Activated B cell treated with CpG ODN at 0.5 μM for 24 hours (primary cell): ENCODE measurements at regions of chr15 and their contacts with region 1.

Region 1: DNA sequence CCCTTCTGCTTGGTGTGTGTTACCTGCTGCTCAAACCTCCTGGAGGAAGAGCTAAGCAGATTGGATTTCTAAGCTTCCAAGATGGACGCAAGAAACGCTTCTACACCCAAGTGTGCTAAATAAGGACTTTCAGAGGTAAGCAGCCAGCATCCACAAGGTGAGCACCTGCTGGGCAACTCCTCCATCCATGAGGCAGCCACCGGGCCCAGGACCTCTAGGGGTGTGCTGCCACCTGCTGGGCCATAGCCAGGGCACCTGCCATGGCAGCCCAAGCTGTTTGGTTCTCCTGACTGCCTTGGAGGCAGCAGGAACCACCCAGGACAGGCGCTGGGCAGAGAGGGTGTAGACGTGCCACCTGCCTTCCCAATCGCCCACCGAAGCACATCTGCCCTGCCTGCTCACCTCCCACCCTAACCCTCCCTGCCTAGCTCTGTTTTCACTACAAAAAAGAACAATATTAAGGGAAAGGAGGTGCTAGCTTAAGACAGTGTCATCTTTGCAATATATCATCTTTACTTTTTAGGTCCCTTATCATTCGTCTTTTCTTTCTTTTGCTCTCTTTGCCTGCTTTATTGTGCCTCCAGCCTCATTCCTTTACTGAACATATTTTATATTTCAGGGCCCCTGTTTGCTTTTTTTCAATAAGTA is 12.9 kb downstream of the C15orf62 start:
- DNase-seq: peak; percentile 76
- ATAC-seq: peak; percentile 100
- H3K4me3 Mint-ChIP-seq: no peak overlapping the region
- H3K27ac Mint-ChIP-seq: peak overlapping the region; percentile 18
- H3K4me1 Mint-ChIP-seq: peaks cover 12% of the 10 kb centered on the region
- H3K27me3 Mint-ChIP-seq: no peaks in the 10 kb centered on the region
- CTCF ChIP-seq: no peak

Region 2: DNA sequence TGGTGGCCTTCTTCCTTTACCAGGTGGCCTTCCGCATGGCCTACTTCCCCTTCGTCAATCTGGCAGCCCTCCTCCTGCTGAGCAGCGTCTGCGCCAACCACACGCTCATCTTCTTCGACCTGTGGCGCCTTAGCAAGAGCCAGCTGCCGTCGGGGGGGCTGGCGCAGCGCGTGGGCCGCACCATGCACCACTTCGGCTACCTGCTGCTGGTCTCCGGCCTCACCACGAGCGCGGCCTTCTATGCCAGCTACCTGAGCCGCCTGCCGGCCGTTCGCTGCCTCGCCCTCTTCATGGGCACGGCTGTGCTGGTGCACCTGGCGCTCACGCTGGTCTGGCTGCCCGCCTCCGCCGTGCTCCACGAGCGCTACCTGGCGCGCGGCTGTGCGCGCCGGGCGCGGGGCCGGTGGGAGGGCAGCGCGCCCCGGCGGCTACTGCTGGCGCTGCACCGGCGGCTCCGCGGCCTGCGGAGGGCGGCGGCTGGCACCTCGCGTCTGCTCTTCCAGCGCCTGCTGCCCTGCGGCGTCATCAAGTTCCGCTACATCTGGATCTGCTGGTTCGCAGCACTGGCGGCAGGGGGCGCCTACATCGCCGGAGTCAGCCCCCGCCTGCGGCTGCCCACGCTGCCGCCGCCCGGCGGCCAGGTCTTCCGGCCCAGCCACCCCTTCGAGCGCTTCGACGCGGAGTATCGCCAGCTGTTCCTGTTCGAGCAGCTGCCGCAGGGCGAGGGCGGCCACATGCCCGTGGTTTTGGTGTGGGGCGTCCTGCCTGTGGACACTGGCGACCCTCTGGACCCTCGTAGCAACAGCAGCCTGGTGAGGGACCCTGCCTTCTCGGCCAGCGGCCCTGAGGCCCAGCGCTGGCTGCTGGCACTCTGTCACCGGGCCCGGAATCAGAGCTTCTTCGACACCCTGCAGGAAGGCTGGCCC is 414.8 kb before region 1 on chr15:
- CTCF ChIA-PET with region 1: no interaction called
- POLR2A ChIA-PET with region 1: no interaction called
- intact Hi-C with region 1: loop called (anchors 10 kb)
- DNase-seq: peak; percentile 78
- ATAC-seq: peak; percentile 93
- H3K4me3 Mint-ChIP-seq: peak overlapping the region; percentile 83
- H3K27ac Mint-ChIP-seq: peak overlapping the region; percentile 82
- H3K4me1 Mint-ChIP-seq: peaks cover 13% of the 10 kb centered on the region
- H3K27me3 Mint-ChIP-seq: no peaks in the 10 kb centered on the region
- CTCF ChIP-seq: no peak

Region 3: GRCh38 chr15:40513609-40514008 is 269.1 kb before region 1 on chr15:
- CTCF ChIA-PET with region 1: interaction called, 23 read pairs
- POLR2A ChIA-PET with region 1: no interaction called
- intact Hi-C with region 1: no loop called
- DNase-seq: no peak
- ATAC-seq: no peak
- H3K4me3 Mint-ChIP-seq: no peak overlapping the region
- H3K27ac Mint-ChIP-seq: no peak overlapping the region
- H3K4me1 Mint-ChIP-seq: peaks cover 20% of the 10 kb centered on the region
- H3K27me3 Mint-ChIP-seq: no peaks in the 10 kb centered on the region
- CTCF ChIP-seq: no peak

Region 4: DNA sequence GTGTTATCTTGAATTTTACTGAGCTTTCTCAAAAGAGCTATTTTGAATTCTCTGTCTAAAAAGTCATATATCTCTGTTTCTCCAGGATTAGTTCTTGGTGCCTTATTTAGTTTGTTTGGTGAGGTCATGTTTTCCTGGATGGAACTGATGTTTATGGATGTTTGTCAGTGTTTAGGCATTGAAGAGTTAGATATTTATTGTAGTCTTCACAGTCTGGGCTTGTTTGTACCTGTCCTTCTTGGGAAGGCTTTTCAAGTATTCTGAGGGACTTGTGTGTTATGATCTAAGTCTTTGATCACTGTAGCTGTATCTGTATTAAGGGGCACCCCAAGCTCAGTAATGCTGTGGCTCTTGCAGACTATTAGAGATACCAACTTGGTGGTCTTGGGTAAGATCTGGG is 98.3 kb before region 1 on chr15:
- CTCF ChIA-PET with region 1: interaction called, 48 read pairs
- POLR2A ChIA-PET with region 1: no interaction called
- intact Hi-C with region 1: loop called (anchors 1 kb)
- DNase-seq: no peak
- ATAC-seq: no peak
- H3K4me3 Mint-ChIP-seq: no peak overlapping the region
- H3K27ac Mint-ChIP-seq: no peak overlapping the region
- H3K4me1 Mint-ChIP-seq: peaks cover 15% of the 10 kb centered on the region
- H3K27me3 Mint-ChIP-seq: no peaks in the 10 kb centered on the region
- CTCF ChIP-seq: no peak

Region 5: DNA sequence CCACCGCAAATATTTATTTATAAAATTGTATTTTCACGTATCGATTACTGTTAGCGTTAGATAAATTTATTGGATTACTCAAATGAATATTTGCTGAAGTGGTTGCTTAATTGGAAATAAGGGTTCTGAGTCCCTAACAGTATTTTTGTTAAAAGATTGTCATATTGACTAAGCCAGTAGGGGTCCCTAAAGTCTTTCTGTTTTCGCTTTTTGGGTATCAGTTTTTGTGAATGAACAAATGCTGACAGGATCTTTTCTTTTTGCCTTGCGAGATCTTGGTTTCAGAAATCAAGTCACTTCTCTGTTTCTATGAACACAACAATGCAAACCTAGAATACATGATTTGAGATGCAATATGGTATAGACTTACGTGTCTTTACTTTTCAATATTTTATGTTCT is 80.6 kb before region 1 on chr15:
- CTCF ChIA-PET with region 1: interaction called, 11 read pairs
- POLR2A ChIA-PET with region 1: interaction called, 3 read pairs
- intact Hi-C with region 1: loop called (anchors 1 kb)
- DNase-seq: no peak
- ATAC-seq: no peak
- H3K4me3 Mint-ChIP-seq: no peak overlapping the region
- H3K27ac Mint-ChIP-seq: no peak overlapping the region
- H3K4me1 Mint-ChIP-seq: no peaks in the 10 kb centered on the region
- H3K27me3 Mint-ChIP-seq: no peaks in the 10 kb centered on the region
- CTCF ChIP-seq: no peak

Region 6: DNA sequence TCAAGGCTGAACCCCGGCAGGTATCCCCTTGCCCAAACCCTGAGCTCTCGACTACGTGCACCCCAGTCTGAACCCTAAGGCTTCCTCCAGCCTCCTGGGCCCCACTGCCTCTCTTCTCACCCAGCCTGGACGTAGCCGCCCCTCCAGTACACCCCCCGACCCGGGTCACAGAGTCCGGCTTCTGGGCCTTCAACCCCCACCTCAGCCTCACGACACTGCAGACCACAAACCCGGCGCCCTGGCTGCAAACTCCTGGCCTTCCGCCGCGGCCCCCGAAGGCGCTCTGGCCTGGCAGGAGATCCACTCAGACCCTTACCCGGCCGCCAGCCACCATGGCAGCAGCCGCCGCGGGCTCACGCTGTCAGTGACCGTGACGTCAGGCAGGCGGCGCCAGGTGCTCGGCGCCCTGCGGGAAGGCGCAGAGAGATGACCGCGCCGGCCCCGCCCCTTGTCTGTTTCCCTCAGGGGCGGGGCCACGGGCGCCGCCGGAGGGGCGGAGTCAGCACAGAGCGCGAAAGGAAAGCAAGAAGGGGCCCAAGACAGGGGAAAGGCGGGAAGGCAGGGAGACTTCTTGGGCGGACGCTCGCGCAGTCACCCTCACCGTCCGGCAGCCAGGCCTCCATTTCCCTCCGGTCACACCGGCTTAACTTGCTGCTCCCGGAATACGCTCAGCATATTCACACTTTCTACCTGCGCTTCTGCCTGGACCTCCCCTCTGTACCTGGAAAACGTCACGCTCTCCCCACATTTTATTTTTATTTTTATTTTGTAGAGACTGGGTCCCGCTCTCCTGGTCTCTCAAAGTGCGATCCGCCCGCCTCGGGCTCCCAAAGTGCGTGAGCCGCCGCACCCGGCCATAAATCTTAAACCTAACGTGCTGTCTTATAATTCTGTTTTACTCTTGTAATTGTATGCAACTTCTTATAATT is 27.6 kb before region 1 on chr15 and contains the start of gene RMDN3:
- CTCF ChIA-PET with region 1: interaction called, 7 read pairs
- POLR2A ChIA-PET with region 1: interaction called, 5 read pairs
- intact Hi-C with region 1: loop called (anchors 2 kb)
- DNase-seq: peak; percentile 93
- ATAC-seq: peak; percentile 97
- H3K4me3 Mint-ChIP-seq: peak within 1 kb of the TSS; percentile 90
- H3K27ac Mint-ChIP-seq: peak within 1 kb of the TSS; percentile 91
- H3K4me1 Mint-ChIP-seq: peaks cover 25% of the 10 kb centered on the region
- H3K27me3 Mint-ChIP-seq: no peaks in the 10 kb centered on the region
- CTCF ChIP-seq: no peak
- total RNA-seq, gene RMDN3: 25.5 and 25.6 TPM in 2 replicates

Region 7: GRCh38 chr15:40893733-40894688 is 111.3 kb after region 1 on chr15 and contains the start of gene VPS18:
- CTCF ChIA-PET with region 1: interaction called, 6 read pairs
- POLR2A ChIA-PET with region 1: interaction called, 8 read pairs
- intact Hi-C with region 1: loop called (anchors 1 kb)
- DNase-seq: peak; percentile 99
- ATAC-seq: peak; percentile 98
- H3K4me3 Mint-ChIP-seq: peak within 1 kb of the TSS; percentile 98
- H3K27ac Mint-ChIP-seq: peak within 1 kb of the TSS; percentile 90
- H3K4me1 Mint-ChIP-seq: peaks cover 34% of the 10 kb centered on the region
- H3K27me3 Mint-ChIP-seq: no peaks in the 10 kb centered on the region
- CTCF ChIP-seq: peak; percentile 94
- total RNA-seq, gene VPS18: 25.3 and 26.2 TPM in 2 replicates